MCF 10A (cell line): ENCODE measurements at regions of chr1 and their contacts with region 1.

Region 1: DNA sequence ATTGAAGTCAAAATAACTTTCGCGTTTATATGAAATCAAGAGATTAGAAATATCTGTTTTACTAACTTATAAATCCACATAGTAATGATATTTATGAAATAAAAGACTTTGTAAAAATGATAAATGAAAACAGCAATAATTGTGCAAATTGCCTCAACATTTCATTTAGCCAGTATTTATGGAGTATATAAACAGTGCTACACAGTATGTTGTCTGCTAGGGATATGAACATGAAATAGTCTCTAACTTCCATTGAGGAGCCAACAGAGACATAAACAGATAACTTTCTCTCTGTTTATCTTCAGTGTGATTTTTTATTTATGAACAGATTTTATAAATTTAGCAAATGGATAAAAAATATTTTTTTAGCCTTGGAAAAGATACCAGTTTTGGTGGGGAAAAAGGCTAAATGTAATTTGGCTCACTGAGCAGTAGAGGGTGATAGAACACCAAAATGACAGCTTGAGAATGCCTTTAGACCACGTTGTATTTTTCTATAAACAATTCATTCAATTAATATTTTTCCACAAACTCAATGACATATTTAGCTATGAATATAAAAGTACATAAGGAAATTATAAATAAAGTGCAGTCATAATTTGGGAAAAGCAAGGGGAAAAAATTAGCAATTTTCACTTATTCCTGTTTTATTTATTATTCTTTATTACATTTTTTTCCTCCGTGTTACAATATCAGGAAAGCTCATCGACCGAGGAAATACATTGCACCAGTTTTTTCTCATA is 47.5 kb upstream of the EEIG2 start:
- DNase-seq: peak; percentile 52
- H3K4me3 Mint-ChIP-seq: no peak overlapping the region
- H3K27ac Mint-ChIP-seq: no peak overlapping the region
- H3K4me1 Mint-ChIP-seq: no peaks in the 10 kb centered on the region
- H3K27me3 Mint-ChIP-seq: peaks cover 15% of the 10 kb centered on the region
- CTCF ChIP-seq: peak; percentile 86

Region 2: GRCh38 chr1:108194051-108194450 is 318.4 kb before region 1 on chr1:
- CTCF ChIA-PET with region 1: no interaction called
- POLR2A ChIA-PET with region 1: no interaction called
- intact Hi-C with region 1: no loop called
- DNase-seq: no peak
- H3K4me3 Mint-ChIP-seq: no peak overlapping the region
- H3K27ac Mint-ChIP-seq: peak overlapping the region; percentile 48
- H3K4me1 Mint-ChIP-seq: peaks cover 29% of the 10 kb centered on the region
- H3K27me3 Mint-ChIP-seq: no peaks in the 10 kb centered on the region
- CTCF ChIP-seq: no peak

Region 3: DNA sequence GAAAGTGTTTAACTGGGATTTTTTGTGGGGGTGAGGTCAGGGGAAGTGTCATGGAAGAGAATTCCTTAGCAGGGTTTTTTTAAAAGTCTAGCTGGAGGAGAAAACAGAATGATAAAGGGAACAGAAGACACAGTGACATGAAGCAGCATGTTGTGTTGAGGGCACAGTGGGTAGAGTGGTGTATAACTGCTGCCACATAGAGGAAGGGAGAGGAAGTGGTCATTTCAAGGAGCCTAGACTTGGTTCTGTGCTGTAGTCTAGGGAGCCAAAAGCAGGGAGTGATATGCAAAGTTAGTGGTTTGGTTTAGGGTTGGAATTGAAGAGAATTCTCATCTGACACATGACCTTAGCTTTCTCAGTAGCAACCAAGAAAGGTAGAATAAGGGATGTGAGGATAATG is 57.7 kb after region 1 on chr1:
- CTCF ChIA-PET with region 1: interaction called, 5 read pairs
- POLR2A ChIA-PET with region 1: no interaction called
- intact Hi-C with region 1: loop called (anchors 2 kb)
- DNase-seq: peak; percentile 42
- H3K4me3 Mint-ChIP-seq: no peak overlapping the region
- H3K27ac Mint-ChIP-seq: no peak overlapping the region
- H3K4me1 Mint-ChIP-seq: no peaks in the 10 kb centered on the region
- H3K27me3 Mint-ChIP-seq: no peaks in the 10 kb centered on the region
- CTCF ChIP-seq: peak; percentile 34

Region 4: DNA sequence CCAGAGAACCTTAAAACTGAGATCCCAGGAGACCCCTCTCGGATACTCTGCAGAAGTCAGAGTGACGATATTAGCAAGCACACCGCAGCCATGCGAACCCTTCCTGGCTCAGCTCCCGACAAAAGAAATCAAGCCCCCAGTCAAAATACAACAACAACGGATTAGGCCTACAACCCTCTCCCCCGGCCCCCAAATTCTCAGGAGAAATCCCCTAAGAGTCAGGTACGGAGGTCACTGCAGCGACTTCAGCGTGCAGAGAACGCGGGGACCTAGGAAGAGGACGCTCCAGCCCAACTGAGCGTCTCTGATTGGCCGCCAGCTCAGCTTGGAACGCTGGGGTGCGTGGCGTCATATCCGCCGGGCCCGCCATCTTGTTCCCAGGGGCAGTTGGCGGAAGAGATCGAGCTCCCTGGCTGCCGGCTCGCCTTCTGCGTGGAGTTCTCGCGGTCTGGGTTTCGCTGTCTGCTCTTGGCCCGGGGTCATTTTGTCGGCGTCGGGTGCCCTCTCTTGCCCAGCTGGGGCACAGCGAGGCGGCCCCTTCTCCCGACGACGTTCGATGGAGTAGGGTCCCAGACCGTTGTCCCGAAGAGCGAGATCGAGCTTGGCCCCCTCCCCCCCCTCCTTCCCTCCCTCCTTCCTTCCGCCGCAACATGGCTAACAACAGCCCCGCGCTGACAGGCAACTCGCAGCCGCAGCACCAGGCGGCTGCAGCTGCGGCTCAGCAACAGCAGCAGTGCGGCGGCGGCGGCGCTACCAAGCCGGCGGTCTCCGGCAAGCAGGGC is 179.7 kb after region 1 on chr1 and contains the start of gene PRPF38B:
- CTCF ChIA-PET with region 1: no interaction called
- POLR2A ChIA-PET with region 1: no interaction called
- intact Hi-C with region 1: no loop called
- DNase-seq: peak; percentile 93
- H3K4me3 Mint-ChIP-seq: peak within 1 kb of the TSS; percentile 100
- H3K27ac Mint-ChIP-seq: peak within 1 kb of the TSS; percentile 99
- H3K4me1 Mint-ChIP-seq: peaks cover 26% of the 10 kb centered on the region
- H3K27me3 Mint-ChIP-seq: no peaks in the 10 kb centered on the region
- CTCF ChIP-seq: no peak
- total RNA-seq, gene PRPF38B: 65.1 and 65.3 TPM in 2 replicates